Common myeloid progenitor, CD34-positive (primary cell): ENCODE measurements at regions of chr7 and their contacts with region 1.

Region 1: GRCh38 chr7:142557971-142558582 is 191.2 kb upstream of the PRSS1 start:
- DNase-seq: peak; percentile 71 to 77 (median 75)
- H3K4me3 ChIP-seq: peak overlapping the region in 6 of 7 experiments; percentile 17 to 82 (median 65)
- H3K27ac ChIP-seq: peak overlapping the region; percentile 49 to 77
- H3K4me1 ChIP-seq: peaks cover 18 to 94% (median 80%) of the 10 kb centered on the region in 4 experiments
- H3K27me3 ChIP-seq: no peaks in the 10 kb centered on the region

Region 2: DNA sequence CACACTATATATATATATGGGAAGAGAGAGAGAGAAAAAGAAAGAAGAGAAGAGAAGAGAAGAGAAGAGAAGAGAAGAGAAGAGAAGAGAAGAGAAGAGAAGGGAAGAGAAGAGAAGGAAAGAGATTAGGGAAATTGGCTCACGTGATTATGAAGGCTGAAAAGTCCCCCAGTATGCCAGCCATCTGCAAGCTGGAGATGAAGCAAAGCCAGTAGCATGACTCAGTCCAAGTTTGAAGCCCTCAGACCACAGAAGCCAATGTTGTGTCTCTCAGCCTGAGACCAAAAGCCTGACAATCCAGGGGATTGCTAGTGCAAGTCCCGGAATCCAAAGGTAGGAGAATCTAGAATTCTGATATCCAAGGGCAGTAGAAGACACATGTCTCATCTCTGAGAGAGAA is 15.1 kb before region 1 on chr7:
- CTCF ChIA-PET with region 1: interaction called, 47 read pairs
- POLR2A ChIA-PET with region 1: no interaction called
- DNase-seq: peak; percentile 60 to 91 (median 90)
- H3K4me3 ChIP-seq: no peak overlapping the region
- H3K27ac ChIP-seq: peak overlapping the region in 1 of 2 experiments; percentile 57
- H3K4me1 ChIP-seq: peaks cover 0 to 8% (median 6%) of the 10 kb centered on the region in 4 experiments
- H3K27me3 ChIP-seq: no peaks in the 10 kb centered on the region

Region 3: GRCh38 chr7:142568435-142569097 is 10.5 kb after region 1 on chr7:
- CTCF ChIA-PET with region 1: interaction called, 42 read pairs
- POLR2A ChIA-PET with region 1: no interaction called
- DNase-seq: peak in 2 of 3 donors; percentile 58 to 78
- H3K4me3 ChIP-seq: no peak overlapping the region
- H3K27ac ChIP-seq: no peak overlapping the region
- H3K4me1 ChIP-seq: peaks cover 5 to 63% (median 50%) of the 10 kb centered on the region in 4 experiments
- H3K27me3 ChIP-seq: no peaks in the 10 kb centered on the region

Region 4: DNA sequence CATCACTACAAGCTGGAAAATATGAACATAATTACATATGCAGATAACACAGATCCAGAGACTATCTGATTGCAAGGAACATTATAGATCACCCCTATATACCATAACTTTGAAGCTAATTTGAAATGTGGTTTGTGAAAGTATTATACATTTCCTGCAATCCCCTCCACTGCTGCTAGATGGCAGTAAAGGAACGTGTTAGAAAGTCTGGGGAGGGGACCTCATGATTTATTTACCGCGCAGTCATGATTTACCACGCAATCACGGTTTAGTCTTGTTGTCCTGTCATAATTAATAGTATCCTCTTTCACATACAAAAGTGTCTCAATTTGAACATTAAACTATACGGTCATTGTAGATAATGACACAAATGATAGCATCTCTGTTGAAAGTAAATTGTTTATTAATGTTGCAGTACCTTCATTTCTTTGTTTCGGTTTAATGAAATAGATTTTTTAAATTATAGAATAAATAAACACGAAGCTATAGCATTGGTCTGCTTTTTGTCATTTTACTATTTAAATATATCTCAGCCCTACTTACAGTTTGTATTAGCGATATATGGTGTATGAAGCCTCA is 45.9 kb after region 1 on chr7:
- CTCF ChIA-PET with region 1: interaction called, 10 read pairs
- POLR2A ChIA-PET with region 1: no interaction called
- DNase-seq: peak; percentile 68 to 87 (median 83)
- H3K4me3 ChIP-seq: no peak overlapping the region
- H3K27ac ChIP-seq: no peak overlapping the region
- H3K4me1 ChIP-seq: peaks cover 0 to 29% (median 22%) of the 10 kb centered on the region in 4 experiments
- H3K27me3 ChIP-seq: no peaks in the 10 kb centered on the region